Activated T-helper 1 cell treated with anti-CD3 and anti-CD28 coated beads, Interleukin-12 subunit alpha, Interleukin-12 subunit beta, Interleukin-2, Interleukin-4 antibody, amounts not matched to agents 30 ng/mL and 10 ng/mL and 1 ng/mL, durations not matched to agents 14 hours and 24 hours and 36 hours (primary cell): ENCODE measurements at regions of chr4 and their contacts with region 1.

Region 1: DNA sequence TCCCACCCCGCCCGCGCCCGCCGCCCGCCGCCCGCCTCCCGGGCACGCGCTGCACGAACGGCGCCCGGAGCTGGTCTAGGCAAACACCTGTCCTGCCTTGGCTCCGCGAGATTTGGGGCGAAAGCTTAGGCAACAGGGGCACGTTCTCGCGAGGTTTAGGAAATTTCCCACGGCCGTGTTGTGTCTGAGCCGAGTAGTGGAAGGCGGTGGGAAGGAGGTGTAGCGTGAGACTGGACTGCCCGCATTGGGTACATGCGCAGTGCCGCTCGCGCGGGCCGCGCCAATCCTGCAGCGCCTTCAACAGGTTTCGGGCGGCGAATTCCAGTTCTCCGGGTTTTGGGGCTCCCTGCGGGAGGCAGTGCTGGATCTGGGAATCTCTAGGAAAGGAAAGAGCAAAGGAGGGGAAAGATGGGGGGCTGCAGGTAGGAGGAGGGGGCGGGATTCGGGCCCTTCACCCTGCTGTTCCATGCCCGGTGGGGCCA is 1.3 kb upstream of the RBPJ start:
- DNase-seq: peak; percentile 98
- H3K4me3 Mint-ChIP-seq: peak overlapping the region; percentile 94
- H3K27ac Mint-ChIP-seq: peak overlapping the region; percentile 100
- H3K4me1 Mint-ChIP-seq: peaks cover 33% of the 10 kb centered on the region
- H3K27me3 Mint-ChIP-seq: peaks cover 2% of the 10 kb centered on the region

Region 2: DNA sequence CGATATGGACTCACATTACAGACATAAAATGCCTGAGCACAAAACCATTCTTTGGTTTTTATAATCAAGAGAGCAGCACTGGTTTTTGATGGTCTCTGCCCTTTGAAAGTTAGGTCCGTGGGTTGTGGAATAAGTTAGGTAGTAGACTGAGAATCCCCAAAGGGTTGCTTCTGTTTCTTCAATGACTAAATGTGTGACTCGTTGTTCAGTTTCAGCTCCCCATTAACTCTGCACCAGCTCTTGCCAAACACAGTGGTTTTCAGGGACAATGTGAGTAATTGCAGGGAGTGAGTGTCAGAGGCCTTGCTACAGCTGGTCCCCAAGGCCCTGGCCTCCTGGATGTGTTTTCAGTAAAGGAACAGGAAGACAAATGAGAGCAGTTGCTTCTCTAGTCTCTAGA is 380.7 kb before region 1 on chr4:
- intact Hi-C with region 1: loop called (anchors 1 kb)
- DNase-seq: no peak
- H3K4me3 Mint-ChIP-seq: peak overlapping the region; percentile 36
- H3K27ac Mint-ChIP-seq: peak overlapping the region; percentile 91
- H3K4me1 Mint-ChIP-seq: peaks cover 37% of the 10 kb centered on the region
- H3K27me3 Mint-ChIP-seq: peaks cover 4% of the 10 kb centered on the region

Region 3: GRCh38 chr4:26130173-26130572 is 189.3 kb before region 1 on chr4:
- intact Hi-C with region 1: loop called (anchors 1 kb)
- DNase-seq: no peak
- H3K4me3 Mint-ChIP-seq: no peak overlapping the region
- H3K27ac Mint-ChIP-seq: peak overlapping the region; percentile 65
- H3K4me1 Mint-ChIP-seq: peaks cover 81% of the 10 kb centered on the region
- H3K27me3 Mint-ChIP-seq: no peaks in the 10 kb centered on the region

Region 4: GRCh38 chr4:26288355-26288909 is 31.1 kb before region 1 on chr4:
- intact Hi-C with region 1: loop called (anchors 1 kb)
- DNase-seq: peak; percentile 20
- H3K4me3 Mint-ChIP-seq: peak overlapping the region; percentile 25
- H3K27ac Mint-ChIP-seq: peak overlapping the region; percentile 61
- H3K4me1 Mint-ChIP-seq: peaks cover 32% of the 10 kb centered on the region
- H3K27me3 Mint-ChIP-seq: no peaks in the 10 kb centered on the region

Region 5: GRCh38 chr4:26299254-26299882 is 20.1 kb before region 1 on chr4:
- intact Hi-C with region 1: no loop called
- DNase-seq: no peak
- H3K4me3 Mint-ChIP-seq: no peak overlapping the region
- H3K27ac Mint-ChIP-seq: no peak overlapping the region
- H3K4me1 Mint-ChIP-seq: peaks cover 26% of the 10 kb centered on the region
- H3K27me3 Mint-ChIP-seq: no peaks in the 10 kb centered on the region

Region 6: DNA sequence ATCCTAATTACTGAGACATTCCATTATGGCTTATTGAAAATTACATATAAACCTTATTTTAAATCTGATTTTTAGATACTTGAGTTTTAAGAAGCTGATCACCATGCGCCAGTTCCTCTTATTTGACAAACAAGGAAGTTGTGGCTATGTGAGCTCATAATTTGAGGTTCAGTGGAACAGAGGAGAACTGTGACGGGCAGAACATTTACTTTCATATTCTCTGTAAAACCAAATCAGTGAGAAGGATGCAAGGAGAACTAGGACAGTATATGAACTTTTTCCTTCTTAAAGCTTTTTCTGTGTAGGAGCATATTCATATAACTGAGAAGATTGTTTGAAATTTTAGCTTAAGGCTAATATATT is 566.4 kb after region 1 on chr4:
- intact Hi-C with region 1: loop called (anchors 2 kb)
- DNase-seq: peak; percentile 43
- H3K4me3 Mint-ChIP-seq: peak overlapping the region; percentile 69
- H3K27ac Mint-ChIP-seq: peak overlapping the region; percentile 91
- H3K4me1 Mint-ChIP-seq: peaks cover 77% of the 10 kb centered on the region
- H3K27me3 Mint-ChIP-seq: no peaks in the 10 kb centered on the region